WTC11 (cell line): ENCODE measurements at regions of chr19 and their contacts with region 1.

Region 1: DNA sequence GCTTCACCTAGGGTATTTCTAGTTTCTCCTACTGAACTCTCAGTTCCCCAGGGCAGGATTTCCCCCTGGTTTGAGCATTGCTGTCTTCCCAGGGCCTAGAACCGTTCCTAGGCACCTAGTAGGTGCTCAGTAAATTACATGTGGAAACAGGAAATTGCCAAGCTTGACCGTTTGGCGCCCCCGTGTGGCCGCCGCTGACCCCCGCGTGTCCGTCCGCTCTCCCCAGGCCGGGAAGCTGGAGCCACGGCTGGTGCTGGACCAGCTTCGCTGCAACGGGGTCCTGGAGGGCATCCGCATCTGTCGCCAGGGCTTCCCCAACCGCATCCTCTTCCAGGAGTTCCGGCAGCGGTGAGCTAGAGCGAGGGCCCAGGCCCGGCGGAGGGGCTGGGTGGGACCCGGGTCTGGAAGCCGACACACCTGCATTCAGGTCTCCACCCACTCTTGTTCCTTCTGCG is 55.5 kb downstream of the MYH14 start:
- DNase-seq: peak; percentile 84
- ATAC-seq: peak; percentile 89
- H3K4me3 Mint-ChIP-seq: no peak overlapping the region
- H3K27ac Mint-ChIP-seq: no peak overlapping the region
- H3K4me1 Mint-ChIP-seq: no peaks in the 10 kb centered on the region
- H3K27me3 Mint-ChIP-seq: peaks cover 4% of the 10 kb centered on the region; the same call in 1 of the 2 replicates
- CTCF ChIP-seq: peak; percentile 89

Region 2: DNA sequence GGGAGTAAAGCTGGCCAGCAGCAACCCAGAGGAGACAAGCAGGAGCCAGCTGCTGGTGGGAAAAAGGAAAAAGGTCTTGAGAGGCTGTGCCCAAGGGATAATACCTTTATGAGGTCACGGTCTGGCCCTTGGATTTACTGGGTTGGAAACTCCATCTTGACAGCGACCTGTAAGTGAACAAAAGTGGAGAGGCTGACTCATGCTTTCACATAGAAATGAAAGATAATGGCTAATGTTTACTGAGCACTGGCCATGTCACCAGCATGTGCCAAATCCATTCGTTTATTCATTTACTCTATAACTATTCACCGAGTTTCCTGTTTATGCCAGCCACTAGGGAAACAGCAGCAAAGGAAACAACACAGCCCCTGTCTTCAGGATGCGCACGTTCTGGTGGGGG is 238.5 kb before region 1 on chr19:
- CTCF ChIA-PET with region 1: no interaction called
- POLR2A ChIA-PET with region 1: no interaction called
- DNase-seq: no peak
- ATAC-seq: no peak
- H3K4me3 Mint-ChIP-seq: no peak overlapping the region
- H3K27ac Mint-ChIP-seq: no peak overlapping the region
- H3K4me1 Mint-ChIP-seq: peaks cover 4% of the 10 kb centered on the region
- H3K27me3 Mint-ChIP-seq: peaks cover 3% of the 10 kb centered on the region; the same call in 1 of the 2 replicates
- CTCF ChIP-seq: no peak

Region 3: DNA sequence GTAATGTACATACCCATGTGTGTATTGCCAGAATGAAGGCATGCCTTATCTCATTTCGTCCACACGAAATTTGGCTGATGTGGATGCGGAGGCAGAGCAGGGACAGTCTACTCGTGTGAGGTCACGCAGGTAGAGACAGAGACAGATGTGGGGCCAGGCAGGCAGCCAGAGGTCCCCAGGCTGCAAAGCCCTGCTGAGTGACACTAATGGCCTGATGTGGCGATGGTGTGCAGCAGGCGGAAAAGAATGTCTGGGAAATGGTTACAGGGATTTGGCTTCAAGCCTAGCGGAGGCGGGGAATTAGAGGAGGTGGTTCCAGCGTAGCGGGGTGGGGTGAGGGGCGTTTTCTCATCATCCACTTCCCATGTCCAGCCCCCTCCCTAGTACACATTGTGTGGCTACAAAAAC is 91.6 kb before region 1 on chr19:
- CTCF ChIA-PET with region 1: interaction called, 15 read pairs
- POLR2A ChIA-PET with region 1: interaction called, 6 read pairs
- DNase-seq: no peak
- ATAC-seq: no peak
- H3K4me3 Mint-ChIP-seq: no peak overlapping the region
- H3K27ac Mint-ChIP-seq: no peak overlapping the region
- H3K4me1 Mint-ChIP-seq: 0 out of 2 replicates have a peak, but pooled peaks cover 3% of the 10 kb centered on the region
- H3K27me3 Mint-ChIP-seq: peaks cover 19% of the 10 kb centered on the region
- CTCF ChIP-seq: no peak

Region 4: DNA sequence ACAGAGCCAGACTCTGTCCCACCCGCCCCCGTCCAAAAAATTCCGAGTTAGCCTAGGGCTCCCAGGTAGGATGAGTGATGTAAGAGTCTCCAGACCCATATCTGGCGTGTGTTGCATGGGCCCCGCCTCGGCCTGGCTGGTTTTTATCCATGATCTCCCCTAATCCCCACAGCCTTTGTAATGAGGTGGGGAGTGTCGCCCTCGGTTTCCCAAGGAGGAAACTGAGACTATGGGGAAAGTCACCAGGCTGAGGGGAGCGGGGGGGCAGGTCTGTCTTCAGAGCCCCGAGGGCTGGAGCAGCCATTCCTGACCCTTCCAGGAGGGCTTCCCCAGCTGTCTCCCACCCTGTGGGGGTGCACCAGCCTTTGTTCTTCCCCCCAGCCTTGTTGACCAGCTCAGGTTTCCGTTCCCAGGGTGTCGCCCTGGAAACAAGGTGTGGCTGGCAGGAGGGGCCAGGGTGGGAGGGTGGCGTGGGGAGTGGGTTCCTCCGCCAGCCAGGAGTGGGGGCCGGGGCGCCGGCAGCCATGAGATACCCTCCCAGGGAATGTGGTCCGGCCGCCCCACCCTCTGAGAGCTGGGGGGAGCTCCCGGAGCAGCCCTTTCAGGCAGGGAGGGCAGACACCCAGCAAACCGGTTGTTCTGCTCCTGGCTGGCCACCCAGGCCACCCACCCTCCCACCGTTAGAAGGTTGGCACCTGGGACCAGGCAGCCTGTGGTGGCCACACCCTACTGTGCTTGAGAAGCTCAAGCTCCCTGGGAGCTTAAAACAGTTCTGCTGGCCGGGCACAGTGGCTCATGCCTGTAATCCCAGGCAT is 44.0 kb before region 1 on chr19:
- CTCF ChIA-PET with region 1: interaction called, 14 read pairs
- POLR2A ChIA-PET with region 1: interaction called, 5 read pairs
- DNase-seq: peak; percentile 55
- ATAC-seq: peak; percentile 61; the same call in 1 of the 2 replicates
- H3K4me3 Mint-ChIP-seq: no peak overlapping the region
- H3K27ac Mint-ChIP-seq: no peak overlapping the region
- H3K4me1 Mint-ChIP-seq: peaks cover 11% of the 10 kb centered on the region
- H3K27me3 Mint-ChIP-seq: no peaks in the 10 kb centered on the region
- CTCF ChIP-seq: no peak

Region 5: DNA sequence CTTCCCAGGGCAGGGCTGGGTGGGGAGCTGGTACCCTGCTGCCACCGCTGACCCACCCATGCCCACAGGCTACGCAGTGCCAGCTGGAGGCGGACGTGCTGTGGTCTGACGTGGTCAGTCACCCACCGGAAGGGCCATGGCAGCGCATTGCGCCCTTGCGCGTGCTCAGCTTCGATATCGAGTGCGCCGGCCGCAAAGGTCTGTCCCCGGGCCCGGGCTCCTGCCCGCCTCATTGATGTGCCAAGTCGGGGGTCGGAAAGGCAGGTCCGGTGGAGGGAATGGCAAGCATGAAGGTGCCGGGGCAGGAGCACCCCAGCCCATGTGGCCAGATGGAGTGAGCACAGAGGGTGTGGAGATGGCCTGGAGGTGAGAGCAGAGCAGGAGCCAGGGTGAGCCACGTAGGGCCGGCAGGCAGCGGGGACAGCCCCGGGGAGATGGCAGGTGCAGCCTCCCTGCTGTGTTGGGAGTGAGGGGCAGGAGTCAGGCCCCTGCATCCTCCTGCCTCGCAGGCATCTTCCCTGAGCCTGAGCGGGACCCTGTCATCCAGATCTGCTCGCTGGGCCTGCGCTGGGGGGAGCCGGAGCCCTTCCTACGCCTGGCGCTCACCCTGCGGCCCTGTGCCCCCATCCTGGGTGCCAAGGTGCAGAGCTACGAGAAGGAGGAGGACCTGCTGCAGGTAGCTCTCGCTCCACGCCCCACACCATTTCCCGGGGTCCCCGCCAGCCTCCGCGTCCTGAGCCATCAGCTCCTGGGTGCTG is 143.8 kb after region 1 on chr19:
- CTCF ChIA-PET with region 1: no interaction called
- POLR2A ChIA-PET with region 1: no interaction called
- DNase-seq: no peak
- ATAC-seq: no peak
- H3K4me3 Mint-ChIP-seq: no peak overlapping the region
- H3K27ac Mint-ChIP-seq: no peak overlapping the region
- H3K4me1 Mint-ChIP-seq: no peaks in the 10 kb centered on the region
- H3K27me3 Mint-ChIP-seq: no peaks in the 10 kb centered on the region
- CTCF ChIP-seq: no peak